Sigmoid colon (tissue), 7 donors: ENCODE measurements at regions of chr17 and their contacts with region 1.

Region 1: GRCh38 chr17:11997147-11997846 is at the start of gene ZNF18:
- DNase-seq: peak; percentile 98
- H3K4me3 ChIP-seq: peak within 1 kb of the TSS; percentile 74 to 92 (median 86)
- H3K27ac ChIP-seq: peak within 1 kb of the TSS; percentile 88 to 93 (median 90)
- H3K4me1 ChIP-seq: peaks cover 0 to 14% (median 5%) of the 10 kb centered on the region in 4 donors
- H3K27me3 ChIP-seq: no peaks in the 10 kb centered on the region
- CTCF ChIP-seq: no peak
- EP300 ChIP-seq: no peak
- POLR2A ChIP-seq: peak; percentile 88
- total RNA-seq, gene ZNF18: 5.0 to 8.9 (median 6.5) TPM

Region 2: GRCh38 chr17:11969565-11969964 is 27.7 kb before region 1 on chr17:
- intact Hi-C with region 1: no loop called
- DNase-seq: no peak
- H3K4me3 ChIP-seq: no peak overlapping the region
- H3K27ac ChIP-seq: no peak overlapping the region
- H3K4me1 ChIP-seq: no peaks in the 10 kb centered on the region
- H3K27me3 ChIP-seq: no peaks in the 10 kb centered on the region
- CTCF ChIP-seq: no peak
- EP300 ChIP-seq: no peak
- POLR2A ChIP-seq: no peak

Region 3: GRCh38 chr17:12020642-12021622 is 23.6 kb after region 1 on chr17 and contains the start of gene MAP2K4:
- intact Hi-C with region 1: loop called (anchors 1 kb)
- DNase-seq: peak; percentile 95
- H3K4me3 ChIP-seq: peak within 1 kb of the TSS; percentile 69 to 97 (median 91)
- H3K27ac ChIP-seq: peak within 1 kb of the TSS; percentile 84 to 93 (median 90)
- H3K4me1 ChIP-seq: peaks cover 0 to 41% (median 32%) of the 10 kb centered on the region in 4 donors
- H3K27me3 ChIP-seq: no peaks in the 10 kb centered on the region
- CTCF ChIP-seq: no peak
- EP300 ChIP-seq: peak in 1 of 4 donors; percentile 8
- POLR2A ChIP-seq: peak in 1 of 2 donors; percentile 26
- total RNA-seq, gene MAP2K4: 27.4 to 41.3 (median 33.2) TPM

Region 4: GRCh38 chr17:12047681-12048376 is 50.5 kb after region 1 on chr17:
- intact Hi-C with region 1: no loop called
- DNase-seq: no peak
- H3K4me3 ChIP-seq: no peak overlapping the region
- H3K27ac ChIP-seq: no peak overlapping the region
- H3K4me1 ChIP-seq: peaks cover 0 to 56% (median 19%) of the 10 kb centered on the region in 4 donors
- H3K27me3 ChIP-seq: no peaks in the 10 kb centered on the region
- CTCF ChIP-seq: no peak
- EP300 ChIP-seq: no peak
- POLR2A ChIP-seq: no peak

Region 5: GRCh38 chr17:12118617-12119016 is 121.3 kb after region 1 on chr17:
- intact Hi-C with region 1: loop called (anchors 10 kb)
- DNase-seq: no peak
- H3K4me3 ChIP-seq: no peak overlapping the region
- H3K27ac ChIP-seq: no peak overlapping the region
- H3K4me1 ChIP-seq: no peaks in the 10 kb centered on the region
- H3K27me3 ChIP-seq: no peaks in the 10 kb centered on the region
- CTCF ChIP-seq: no peak
- EP300 ChIP-seq: no peak
- POLR2A ChIP-seq: no peak

Region 6: DNA sequence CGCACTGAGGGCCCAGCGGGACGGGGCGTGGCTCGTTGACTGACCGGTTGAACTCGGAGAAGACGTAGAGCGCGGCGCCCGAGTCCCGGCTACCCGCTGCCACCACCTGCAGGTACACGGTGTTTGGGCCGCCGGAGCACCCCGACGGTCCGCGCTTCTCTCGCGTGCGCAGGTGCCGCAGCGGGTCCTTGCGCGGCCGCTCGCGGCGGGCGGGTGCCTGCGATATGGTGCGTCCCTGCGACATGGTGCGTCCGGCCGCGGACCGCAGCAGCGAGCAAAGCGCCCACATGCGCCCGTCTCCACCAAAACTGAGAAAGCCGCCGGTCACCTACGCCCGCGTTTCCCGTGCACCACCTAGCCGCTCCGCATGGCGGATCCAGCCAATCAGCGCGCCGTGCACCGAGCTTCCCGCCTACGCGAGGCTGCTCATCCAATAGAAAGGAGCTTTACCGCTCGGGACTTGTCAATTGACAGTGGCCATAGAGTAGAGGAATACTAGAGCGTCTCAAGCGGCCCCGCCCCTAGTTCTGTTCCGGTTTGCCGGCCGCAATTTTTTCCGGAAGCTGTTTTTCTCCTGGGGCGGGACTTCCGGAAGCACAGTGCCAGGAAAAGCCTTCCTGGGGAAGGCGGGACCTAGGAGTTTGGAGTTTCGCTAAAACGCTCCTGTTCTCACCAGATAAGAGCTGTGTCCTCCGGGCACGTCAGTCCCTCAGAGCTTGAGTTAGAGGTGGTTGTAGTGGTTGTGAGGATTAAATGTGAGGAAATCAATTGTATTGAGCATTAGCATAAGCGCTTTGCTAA is 1020.6 kb after region 1 on chr17 and contains the start of gene ELAC2:
- intact Hi-C with region 1: loop called (anchors 10 kb)
- DNase-seq: peak; percentile 99
- H3K4me3 ChIP-seq: peak within 1 kb of the TSS; percentile 89 to 100 (median 94)
- H3K27ac ChIP-seq: peak within 1 kb of the TSS; percentile 86 to 93 (median 88)
- H3K4me1 ChIP-seq: peaks cover 0 to 23% (median 16%) of the 10 kb centered on the region in 4 donors
- H3K27me3 ChIP-seq: no peaks in the 10 kb centered on the region
- CTCF ChIP-seq: peak in 1 of 4 experiments; percentile 18
- EP300 ChIP-seq: no peak
- POLR2A ChIP-seq: peak in 1 of 2 donors; percentile 51
- total RNA-seq, gene ELAC2: 46.9 to 67.0 (median 50.2) TPM